ACHN (cell line): ENCODE measurements at regions of chr16 and their contacts with region 1.

Region 1: DNA sequence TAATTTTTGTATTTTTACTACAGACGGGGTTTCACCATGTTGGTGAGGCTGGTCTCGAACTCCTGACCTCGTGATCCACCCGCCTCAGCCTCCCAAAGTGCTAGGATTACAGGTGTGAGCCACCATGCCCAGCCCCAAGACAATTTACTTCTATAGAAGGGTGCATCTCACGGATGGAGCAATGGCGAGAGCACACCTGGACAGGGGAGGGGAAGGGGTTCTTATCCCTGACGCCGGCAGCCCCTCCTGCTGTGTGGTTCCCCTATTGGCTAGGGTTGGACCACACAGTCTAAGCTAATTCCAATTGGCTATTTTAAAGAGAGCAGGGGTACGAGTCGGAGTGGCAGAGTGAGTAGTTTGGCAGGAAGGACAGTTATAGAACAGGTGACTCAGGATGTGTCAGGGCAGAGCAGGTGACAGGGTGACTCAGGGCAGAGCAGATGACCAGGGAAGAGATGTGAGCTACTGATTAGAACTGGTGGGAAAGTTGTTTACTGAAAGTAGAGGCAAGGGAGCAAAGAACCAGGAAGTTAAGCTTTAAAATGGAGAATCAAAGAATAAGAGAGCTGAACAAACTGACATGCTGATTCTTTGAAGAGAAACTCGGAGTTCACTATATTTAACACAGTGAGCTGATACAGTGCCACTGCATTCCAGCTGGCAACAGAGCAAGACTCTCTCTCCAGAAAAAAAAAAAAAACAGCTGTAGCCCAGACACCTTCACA is 12.6 kb upstream of the UBE2I start:
- DNase-seq: peak; percentile 89

Region 2: DNA sequence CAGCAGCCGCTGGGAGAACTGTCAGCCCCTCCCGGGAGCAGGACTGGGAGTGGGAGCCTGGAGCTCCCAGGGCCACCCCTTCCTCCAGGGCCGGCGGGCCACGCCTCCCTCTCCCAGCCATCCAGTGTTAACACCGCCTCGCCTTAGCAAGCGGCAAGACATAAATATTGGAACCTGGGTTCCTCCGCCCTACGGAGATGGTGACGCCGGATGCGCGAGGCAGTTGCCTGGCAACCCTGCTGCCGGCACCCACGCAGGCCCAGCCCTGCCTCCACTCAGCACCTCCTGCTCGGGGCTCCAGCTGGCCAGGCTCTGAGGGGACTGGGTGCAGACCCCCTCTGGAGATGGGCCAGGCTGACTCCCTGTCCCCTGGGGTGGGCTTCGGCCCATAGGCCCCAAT is 171.4 kb before region 1 on chr16:
- in situ Hi-C with region 1: loop called (anchors 25 kb)
- DNase-seq: no peak

Region 3: GRCh38 chr16:1378804-1379303 is 82.0 kb after region 1 on chr16:
- in situ Hi-C with region 1: loop called (anchors 25 kb)
- DNase-seq: peak; percentile 78